Activated CD4-positive, alpha-beta memory T cell treated with anti-CD3 and anti-CD28 coated beads, Interleukin-2, amount 10 ng/mL, durations not matched to agents 7 days and 5 days (primary cell): ENCODE measurements at regions of chr17 and their contacts with region 1.

Region 1: GRCh38 chr17:3845621-3846441 is at the start of gene NCBP3:
- DNase-seq: peak; percentile 92
- H3K4me3 Mint-ChIP-seq: peak within 1 kb of the TSS; percentile 95
- H3K27ac Mint-ChIP-seq: peak within 1 kb of the TSS; percentile 88
- H3K4me1 Mint-ChIP-seq: peaks cover 25% of the 10 kb centered on the region
- H3K27me3 Mint-ChIP-seq: peaks cover 9% of the 10 kb centered on the region
- total RNA-seq, gene NCBP3: 42.8 to 43.9 TPM

Region 2: GRCh38 chr17:3695723-3696411 is 150.0 kb before region 1 on chr17 and contains the start of gene P2RX5:
- CTCF ChIA-PET with region 1: no interaction called
- POLR2A ChIA-PET with region 1: no interaction called
- DNase-seq: peak; percentile 61
- H3K4me3 Mint-ChIP-seq: peak within 1 kb of the TSS; percentile 85
- H3K27ac Mint-ChIP-seq: peak within 1 kb of the TSS; percentile 79
- H3K4me1 Mint-ChIP-seq: peaks cover 34% of the 10 kb centered on the region
- H3K27me3 Mint-ChIP-seq: no peaks in the 10 kb centered on the region
- total RNA-seq, gene P2RX5: 30.8 to 31.1 TPM

Region 3: GRCh38 chr17:3723556-3724369 is 122.1 kb before region 1 on chr17 and contains the start of gene HASPIN:
- CTCF ChIA-PET with region 1: interaction called, 18 read pairs
- POLR2A ChIA-PET with region 1: interaction called, 8 read pairs
- DNase-seq: peak; percentile 93
- H3K4me3 Mint-ChIP-seq: peak within 1 kb of the TSS; percentile 79
- H3K27ac Mint-ChIP-seq: peak within 1 kb of the TSS; percentile 68
- H3K4me1 Mint-ChIP-seq: peaks cover 65% of the 10 kb centered on the region
- H3K27me3 Mint-ChIP-seq: no peaks in the 10 kb centered on the region
- total RNA-seq, gene HASPIN: 23.8 to 25.2 TPM

Region 4: DNA sequence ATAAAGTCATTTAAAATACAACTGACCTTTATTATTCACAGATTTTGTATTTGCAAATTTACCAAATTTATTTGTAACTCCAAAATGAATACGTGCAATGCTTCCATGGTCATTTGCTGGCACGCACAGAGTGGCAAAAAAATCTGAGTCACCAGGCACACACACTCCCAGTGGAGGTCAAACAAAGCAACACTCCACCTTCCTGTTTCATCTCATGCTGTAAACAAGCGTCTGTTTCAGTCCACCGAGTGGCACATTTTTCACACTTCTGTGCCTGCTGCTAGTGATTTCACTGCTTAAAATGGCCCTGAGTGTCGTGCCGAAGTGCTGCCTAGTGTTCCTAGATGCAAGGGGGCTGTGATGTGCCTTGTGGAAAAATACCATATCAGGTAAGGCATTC is 27.0 kb before region 1 on chr17:
- CTCF ChIA-PET with region 1: interaction called, 11 read pairs
- POLR2A ChIA-PET with region 1: no interaction called
- DNase-seq: no peak
- H3K4me3 Mint-ChIP-seq: no peak overlapping the region
- H3K27ac Mint-ChIP-seq: no peak overlapping the region
- H3K4me1 Mint-ChIP-seq: peaks cover 2% of the 10 kb centered on the region
- H3K27me3 Mint-ChIP-seq: no peaks in the 10 kb centered on the region

Region 5: GRCh38 chr17:3857121-3858100 is 11.6 kb after region 1 on chr17:
- CTCF ChIA-PET with region 1: interaction called, 28 read pairs
- POLR2A ChIA-PET with region 1: interaction called, 11 read pairs
- DNase-seq: no peak
- H3K4me3 Mint-ChIP-seq: no peak overlapping the region
- H3K27ac Mint-ChIP-seq: no peak overlapping the region
- H3K4me1 Mint-ChIP-seq: peaks cover 2% of the 10 kb centered on the region
- H3K27me3 Mint-ChIP-seq: peaks cover 3% of the 10 kb centered on the region

Region 6: GRCh38 chr17:3913531-3914311 is 67.9 kb after region 1 on chr17:
- CTCF ChIA-PET with region 1: interaction called, 11 read pairs
- POLR2A ChIA-PET with region 1: no interaction called
- DNase-seq: peak; percentile 86
- H3K4me3 Mint-ChIP-seq: no peak overlapping the region
- H3K27ac Mint-ChIP-seq: no peak overlapping the region
- H3K4me1 Mint-ChIP-seq: peaks cover 55% of the 10 kb centered on the region
- H3K27me3 Mint-ChIP-seq: no peaks in the 10 kb centered on the region